Left cardiac atrium (tissue), 4 donors: ENCODE measurements at regions of chr1 and their contacts with region 1.

Region 1: DNA sequence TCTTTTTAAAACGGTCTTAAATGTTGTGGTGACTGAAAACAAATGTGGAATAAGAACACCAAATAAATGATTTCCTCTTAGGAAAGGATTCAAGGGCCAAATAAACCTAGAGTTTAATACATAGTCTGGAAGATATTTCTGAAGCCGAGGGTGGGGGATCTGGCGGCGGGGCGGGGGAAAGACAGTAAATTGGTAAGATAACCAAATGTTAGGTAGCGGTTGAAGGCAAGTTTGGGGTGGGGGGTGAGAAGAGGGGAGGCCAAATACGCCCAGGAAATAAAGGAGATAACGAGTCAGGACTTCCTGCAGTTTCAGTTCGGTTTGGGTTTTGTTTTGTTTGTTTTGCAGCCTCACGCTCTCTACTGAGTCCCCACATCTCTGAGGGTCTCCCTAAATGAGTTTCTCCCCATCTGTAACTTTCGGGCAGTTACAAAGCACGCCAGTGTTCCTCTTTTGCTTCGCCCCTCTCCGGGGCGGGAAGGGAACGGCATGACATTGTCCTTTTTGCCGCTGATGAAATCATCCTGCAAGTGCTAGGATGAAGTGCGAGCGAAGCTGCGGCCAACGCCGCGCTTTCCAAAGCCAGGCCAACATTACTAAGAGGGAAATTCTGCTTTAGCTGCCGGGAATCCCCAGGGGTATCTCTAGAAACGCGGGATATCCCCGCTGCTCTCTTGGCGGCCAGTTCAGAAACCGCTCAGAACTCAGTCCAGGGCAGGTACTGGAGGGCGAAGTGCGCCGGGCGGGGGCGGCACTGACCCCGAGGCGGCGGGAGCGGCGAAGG is 844 bp downstream of the NIBAN1 start:
- DNase-seq: peak; percentile 52
- ATAC-seq: peak; percentile 64 to 74

Region 2: DNA sequence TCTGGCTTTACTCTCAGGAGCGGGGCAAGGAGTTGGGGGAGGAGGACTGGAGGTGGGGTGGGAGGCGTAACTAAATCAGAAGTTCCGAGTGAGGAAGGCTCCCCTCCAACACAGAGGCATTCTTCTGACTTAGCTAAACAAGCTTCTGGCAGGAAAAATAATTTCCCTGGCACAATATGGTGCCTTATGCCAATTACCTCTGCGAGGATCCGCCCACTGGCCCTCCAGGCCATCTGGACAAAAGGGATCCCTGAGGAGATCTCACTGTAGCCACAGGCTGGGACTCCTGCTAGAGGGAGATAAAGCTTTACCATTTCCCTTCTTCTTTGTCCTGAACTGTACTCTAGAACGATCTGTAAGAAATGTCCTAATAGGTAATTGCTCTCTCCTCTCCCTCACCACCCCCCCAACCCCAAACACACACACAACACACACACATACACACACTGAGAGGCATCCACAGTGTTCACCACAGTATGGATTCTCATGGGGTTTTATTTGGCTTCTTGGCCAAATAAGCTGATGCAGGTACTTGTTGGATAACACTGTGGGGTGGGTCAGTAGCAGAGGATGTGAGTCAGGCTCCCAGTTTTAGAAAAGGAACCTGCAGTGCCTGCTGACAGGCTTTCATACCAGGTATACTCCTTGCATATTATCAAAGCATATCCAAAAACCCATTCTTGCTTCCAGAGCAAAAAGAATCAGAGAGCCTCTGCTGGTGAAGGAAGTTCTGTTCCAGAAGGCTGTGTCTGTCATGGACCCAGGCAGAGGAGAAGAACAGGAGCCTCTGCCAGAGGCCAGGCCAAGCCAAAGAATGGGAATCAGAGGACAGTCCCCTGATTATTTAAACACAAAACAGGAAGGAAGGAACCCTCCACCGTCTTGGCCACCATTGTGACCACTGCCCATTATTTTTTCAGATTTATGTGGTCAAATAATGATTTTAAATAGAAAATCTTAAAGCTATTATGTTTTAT is 417.5 kb before region 1 on chr1:
- intact Hi-C with region 1: no loop called
- DNase-seq: no peak
- ATAC-seq: peak; percentile 62 to 66

Region 3: DNA sequence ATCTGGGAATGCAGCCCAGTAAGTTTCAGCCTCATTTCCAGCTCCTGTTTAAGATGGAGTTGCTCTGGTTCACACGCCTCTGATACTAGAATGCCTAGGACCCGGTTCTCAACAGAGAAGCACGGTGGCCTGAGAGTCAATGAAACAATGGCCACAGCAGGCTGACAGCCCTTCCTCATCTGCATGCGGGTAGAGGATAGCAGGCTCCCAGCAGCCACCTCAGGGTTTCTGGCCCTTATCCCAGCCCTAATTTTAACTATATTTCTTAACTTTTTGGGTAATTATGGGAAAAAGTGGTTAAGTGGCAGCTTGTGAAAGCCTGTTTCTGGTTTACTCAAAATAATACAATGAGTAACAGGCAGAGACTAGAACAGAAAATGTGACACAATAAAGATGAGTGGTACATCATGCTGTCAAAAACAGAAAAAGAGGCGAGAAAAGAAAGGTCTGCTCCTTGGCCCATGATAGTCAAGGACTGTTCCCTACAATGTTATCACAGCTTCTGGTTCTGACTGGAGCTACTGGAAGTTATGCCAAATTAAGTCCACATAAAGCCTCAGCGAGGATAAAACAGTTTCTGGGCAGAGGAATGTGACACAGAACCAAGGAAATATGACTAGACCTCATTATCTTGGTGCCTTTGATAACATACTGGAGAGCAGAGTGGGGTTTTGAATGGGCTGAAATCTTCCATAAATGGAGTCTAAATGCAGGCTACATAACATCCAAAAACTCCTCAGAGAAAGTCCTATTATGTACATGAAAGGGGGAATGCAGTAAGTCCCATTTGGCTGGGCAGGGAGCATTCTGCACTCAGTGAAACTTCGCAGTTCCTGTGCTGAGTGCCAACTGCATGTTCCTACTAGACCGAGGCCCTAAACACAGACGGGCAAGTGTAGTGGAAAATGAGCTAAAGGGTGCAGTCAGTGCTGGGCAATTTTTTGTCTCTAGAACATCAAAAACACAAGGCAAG is 91.2 kb before region 1 on chr1:
- intact Hi-C with region 1: loop called (anchors 5 kb)
- DNase-seq: peak; percentile 51
- ATAC-seq: peak; percentile 75 to 78

Region 4: DNA sequence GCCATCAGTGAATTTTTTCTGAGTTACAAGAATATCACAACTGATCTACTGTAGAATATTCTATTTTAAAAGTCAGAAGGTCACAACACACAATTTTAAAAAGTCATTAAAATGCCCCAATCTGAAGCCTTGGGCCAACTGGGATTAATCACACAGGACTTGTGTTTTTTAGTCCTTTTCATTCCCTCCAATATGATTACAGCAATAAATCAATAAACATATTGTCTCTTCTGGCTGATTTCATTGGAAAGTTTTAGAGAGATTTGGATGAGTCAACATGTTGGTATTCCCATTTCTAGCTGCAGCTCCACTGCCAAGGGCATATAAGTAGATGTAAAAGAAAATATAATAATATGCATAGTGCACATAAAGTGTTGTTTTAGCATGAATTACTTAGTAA is 85.0 kb before region 1 on chr1:
- intact Hi-C with region 1: loop called (anchors 5 kb)
- DNase-seq: no peak
- ATAC-seq: no peak

Region 5: DNA sequence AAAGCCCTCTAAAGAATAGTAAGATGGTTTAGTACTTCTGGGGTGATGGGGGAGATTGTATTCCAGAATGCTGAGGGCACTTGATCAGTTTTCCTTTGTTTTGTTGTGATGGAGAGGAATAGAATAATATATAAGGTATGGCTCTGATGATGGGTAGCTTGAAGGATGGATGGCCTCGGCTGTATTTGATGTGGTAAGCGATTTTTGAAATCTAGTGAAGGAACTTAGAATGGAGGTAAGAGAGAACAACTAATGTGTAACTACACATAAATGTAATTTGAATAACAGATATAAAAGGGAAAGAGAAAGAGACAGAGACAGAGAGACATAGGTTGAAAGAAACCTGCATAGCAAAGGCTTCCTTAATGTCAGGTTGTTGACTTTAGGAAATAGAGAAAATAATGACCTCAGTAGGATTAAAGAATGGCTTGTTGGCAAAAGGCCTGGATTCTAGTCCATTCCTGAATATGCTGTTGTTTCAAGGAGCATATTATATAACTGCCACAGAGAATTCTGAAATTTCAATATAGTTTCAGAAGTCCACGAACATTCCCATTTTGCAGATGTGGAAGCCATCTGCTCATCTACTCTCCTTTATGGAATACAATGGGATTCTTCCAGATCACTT is 57.9 kb before region 1 on chr1:
- intact Hi-C with region 1: no loop called
- DNase-seq: no peak
- ATAC-seq: no peak